ENCODE measurements at regions of chr1 and their contacts with region 1.

Region 1: DNA sequence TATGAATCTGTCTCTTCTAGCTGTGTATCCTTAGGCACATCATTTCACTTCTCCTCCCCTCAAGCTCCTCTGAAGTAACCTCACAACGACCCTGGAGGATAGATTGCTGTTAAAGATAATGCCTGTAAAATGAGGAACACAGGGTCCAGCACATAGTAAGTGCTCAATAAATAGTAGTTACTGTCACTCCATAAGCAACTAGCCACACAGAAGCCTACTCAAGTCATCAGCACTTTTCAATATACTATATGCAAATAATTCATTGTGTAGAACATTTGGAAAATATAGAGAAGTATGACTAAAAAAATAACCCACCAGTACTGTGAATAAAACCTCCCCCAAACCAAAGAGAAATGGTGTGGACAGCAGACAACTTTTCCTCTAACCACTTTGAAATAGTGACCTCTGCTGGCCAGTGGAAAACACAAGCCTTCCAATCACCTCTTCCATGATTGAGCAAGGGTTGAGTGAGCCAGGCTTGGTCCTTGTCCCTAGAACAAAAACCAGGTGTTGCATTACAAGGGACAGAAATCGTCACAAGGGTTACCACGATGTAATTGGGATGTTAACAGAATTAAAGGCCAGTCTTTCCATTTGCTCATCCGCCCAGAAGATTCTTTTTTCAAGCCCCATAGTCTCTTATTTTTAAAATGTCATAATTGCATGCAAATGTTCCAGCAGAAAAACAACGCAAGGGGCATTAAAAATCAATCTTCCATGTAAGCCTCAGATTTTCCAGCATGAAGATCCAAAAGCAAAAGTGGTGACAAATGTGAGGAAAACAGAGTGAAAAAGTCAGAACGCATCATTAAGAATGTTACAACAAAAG is 15.7 kb upstream of the GLIS1 start:
- DNase-seq: no peak
- H3K4me3 ChIP-seq: no peak overlapping the region
- H3K27ac ChIP-seq: no peak overlapping the region
- H3K4me1 ChIP-seq: no peaks in the 10 kb centered on the region
- H3K27me3 ChIP-seq: no peaks in the 10 kb centered on the region
- CTCF ChIP-seq: peak; percentile 60 to 68 (median 66)
- EP300 ChIP-seq: no peak
- POLR2A ChIP-seq: no peak

Region 2: GRCh38 chr1:53485478-53486394 is 269.0 kb before region 1 on chr1:
- intact Hi-C with region 1: loop called (anchors 2 kb)
- DNase-seq: peak; percentile 95
- H3K4me3 ChIP-seq: no peak overlapping the region
- H3K27ac ChIP-seq: no peak overlapping the region
- H3K4me1 ChIP-seq: peaks cover 0 to 17% (median 12%) of the 10 kb centered on the region in 4 donors
- H3K27me3 ChIP-seq: peaks cover 0 to 69% (median 1%) of the 10 kb centered on the region in 4 donors
- CTCF ChIP-seq: peak; percentile 79 to 81 (median 80)
- EP300 ChIP-seq: no peak
- POLR2A ChIP-seq: no peak

Measured in esophagus muscularis mucosa (tissue), 4 donors.